Tibial artery (tissue), 4 donors: ENCODE measurements at regions of chr17 and their contacts with region 1.

Region 1: GRCh38 chr17:61399131-61400057 is at the start of gene TBX2:
- DNase-seq: peak; percentile 87 to 95
- H3K4me3 ChIP-seq: peak within 1 kb of the TSS; percentile 77 to 86
- H3K27ac ChIP-seq: peak within 1 kb of the TSS; percentile 98
- H3K4me1 ChIP-seq: peaks cover 0 to 60% (median 49%) of the 10 kb centered on the region in 4 donors
- H3K27me3 ChIP-seq: no peaks in the 10 kb centered on the region
- CTCF ChIP-seq: no peak

Region 2: GRCh38 chr17:60901806-60902205 is 497.6 kb before region 1 on chr17:
- intact Hi-C with region 1: loop called (anchors 5 kb)
- DNase-seq: no peak
- H3K4me3 ChIP-seq: peak overlapping the region; percentile 11 to 19
- H3K27ac ChIP-seq: peak overlapping the region; percentile 69 to 76
- H3K4me1 ChIP-seq: peaks cover 0 to 45% (median 2%) of the 10 kb centered on the region in 4 donors
- H3K27me3 ChIP-seq: no peaks in the 10 kb centered on the region
- CTCF ChIP-seq: no peak

Region 3: DNA sequence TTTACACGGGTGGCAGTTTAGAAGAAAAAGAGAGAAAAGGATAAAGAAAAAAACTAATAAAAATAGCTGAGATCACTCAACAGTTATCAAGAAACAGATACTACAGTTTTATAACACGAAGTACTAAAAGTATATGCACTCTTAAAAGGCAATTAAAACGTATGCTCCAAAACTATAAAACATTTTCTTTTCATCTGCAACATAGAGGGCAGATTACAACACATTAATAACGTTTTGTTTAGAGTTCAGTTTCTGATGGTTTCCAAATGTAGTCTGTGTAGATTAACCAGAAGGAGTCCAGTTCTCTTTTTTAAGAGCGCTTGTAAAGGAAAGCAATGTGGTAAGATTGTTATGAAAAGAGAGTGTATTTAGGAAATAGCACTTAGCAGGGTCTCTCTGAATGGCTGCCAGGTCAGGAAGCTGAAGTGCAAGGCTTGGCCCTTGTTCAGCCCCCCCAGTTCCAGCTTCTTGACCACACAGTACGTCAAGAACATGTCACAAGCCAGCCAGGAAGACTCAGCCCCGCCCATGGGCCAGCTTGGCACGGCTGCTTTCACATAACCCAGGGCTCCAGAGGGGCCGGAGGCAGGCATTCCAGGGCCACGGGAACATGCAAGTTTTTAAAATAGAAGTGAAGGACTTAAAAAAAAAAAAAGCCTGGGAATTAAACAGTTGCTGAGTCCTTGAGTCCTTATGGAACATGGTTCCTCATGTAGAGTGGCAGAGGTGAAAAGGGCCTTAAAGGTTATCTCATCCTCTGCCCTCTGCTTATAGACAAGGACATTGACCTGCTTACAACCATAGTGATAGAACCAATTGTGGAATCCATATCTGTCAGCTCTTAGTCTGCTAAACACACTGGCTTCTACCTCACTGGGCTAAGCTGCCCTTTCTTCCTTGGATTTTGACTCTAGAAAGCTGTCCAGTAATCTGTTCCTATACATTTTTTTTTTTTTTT is 147.2 kb before region 1 on chr17:
- intact Hi-C with region 1: loop called (anchors 5 kb)
- DNase-seq: peak; percentile 97 to 99
- H3K4me3 ChIP-seq: no peak overlapping the region
- H3K27ac ChIP-seq: peak overlapping the region; percentile 78 to 89
- H3K4me1 ChIP-seq: peaks cover 9 to 88% (median 55%) of the 10 kb centered on the region in 4 donors
- H3K27me3 ChIP-seq: no peaks in the 10 kb centered on the region
- CTCF ChIP-seq: no peak